ENCODE measurements at regions of chr14 and their contacts with region 1.

Region 1: DNA sequence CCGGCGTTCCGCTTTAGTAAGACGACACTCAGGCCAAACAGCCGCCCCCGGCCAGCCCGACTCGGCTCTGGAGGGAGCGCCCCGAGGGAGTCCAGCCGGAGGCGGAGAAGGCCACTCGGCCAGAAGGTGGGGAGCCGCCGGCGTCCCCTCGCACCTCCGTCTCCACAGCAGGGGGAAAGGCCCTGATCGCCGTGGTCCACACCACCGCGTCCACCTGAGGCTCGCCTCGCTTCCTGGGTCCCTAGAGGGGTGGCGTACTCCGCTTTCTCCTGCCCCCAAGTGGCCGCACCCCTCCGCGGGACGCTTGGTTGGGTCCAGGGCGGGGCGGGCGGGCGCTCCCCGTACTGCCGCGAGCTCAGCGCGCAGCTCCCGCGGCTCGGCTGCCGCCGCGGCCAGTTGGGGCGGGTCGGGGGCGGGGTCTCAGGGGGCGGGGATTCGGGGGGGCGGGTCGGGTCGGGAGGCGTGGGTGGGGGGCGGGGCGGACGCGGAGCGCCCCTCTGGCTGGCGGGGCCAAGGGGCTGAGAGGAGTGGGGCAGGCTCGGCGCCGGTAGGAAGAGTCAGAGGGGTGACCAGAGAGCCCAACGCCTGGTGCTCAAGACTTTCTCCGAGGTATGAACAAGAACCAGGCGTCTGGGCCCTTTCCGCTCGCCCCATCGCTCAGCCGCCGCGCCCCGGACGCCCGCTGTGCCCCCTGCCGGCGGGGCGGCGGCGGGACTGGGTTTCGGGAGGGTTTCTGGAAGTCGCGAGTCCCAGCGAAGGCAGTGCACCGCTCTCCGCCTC is at the start of gene FRMD6:
- DNase-seq: peak; percentile 97
- total RNA-seq, gene FRMD6: 33.1 to 49.6 TPM

Region 2: GRCh38 chr14:51582437-51582836 is 69.1 kb before region 1 on chr14:
- intact Hi-C with region 1: loop called in 1 of 2 experiments (anchors 2 kb)
- DNase-seq: no peak

Region 3: DNA sequence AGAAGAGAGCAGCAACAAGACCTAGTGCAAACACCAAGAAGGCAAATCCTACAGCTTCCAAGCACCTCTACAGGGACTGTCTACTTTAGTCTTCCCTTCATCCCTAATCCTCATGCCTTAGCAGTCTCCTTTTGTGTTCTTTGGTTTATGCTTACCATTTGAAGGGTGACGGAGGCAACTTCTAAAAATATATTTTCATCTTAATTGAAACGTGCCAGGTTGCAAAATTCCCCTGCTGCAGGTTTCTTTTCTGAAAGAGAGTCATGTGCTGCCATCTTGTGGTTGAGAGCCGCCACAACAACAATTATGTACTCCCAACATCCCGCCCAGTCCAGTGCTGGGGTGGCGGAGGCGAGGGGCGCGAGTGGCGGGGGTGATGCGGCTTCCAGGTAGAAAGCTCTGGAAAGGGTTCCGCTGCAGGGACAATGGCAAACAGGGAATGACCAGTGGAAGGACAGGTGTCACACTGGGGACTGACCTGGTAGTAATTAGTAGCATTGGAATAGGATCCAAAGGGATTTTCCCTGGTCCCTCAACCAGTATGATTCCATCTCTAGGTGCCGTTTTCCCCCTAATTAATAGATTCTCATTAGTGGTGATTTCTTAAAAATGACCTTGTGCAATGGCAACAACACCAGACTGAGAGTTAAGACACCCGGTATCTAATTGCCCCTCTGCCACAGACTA is 128.6 kb after region 1 on chr14:
- intact Hi-C with region 1: loop called in 1 of 2 experiments (anchors 2 kb)
- DNase-seq: peak; percentile 86

Measured in posterior vena cava (tissue), 2 donors.